Posterior vena cava (tissue), 2 donors: ENCODE measurements at regions of chr6 and their contacts with region 1.

Region 1: DNA sequence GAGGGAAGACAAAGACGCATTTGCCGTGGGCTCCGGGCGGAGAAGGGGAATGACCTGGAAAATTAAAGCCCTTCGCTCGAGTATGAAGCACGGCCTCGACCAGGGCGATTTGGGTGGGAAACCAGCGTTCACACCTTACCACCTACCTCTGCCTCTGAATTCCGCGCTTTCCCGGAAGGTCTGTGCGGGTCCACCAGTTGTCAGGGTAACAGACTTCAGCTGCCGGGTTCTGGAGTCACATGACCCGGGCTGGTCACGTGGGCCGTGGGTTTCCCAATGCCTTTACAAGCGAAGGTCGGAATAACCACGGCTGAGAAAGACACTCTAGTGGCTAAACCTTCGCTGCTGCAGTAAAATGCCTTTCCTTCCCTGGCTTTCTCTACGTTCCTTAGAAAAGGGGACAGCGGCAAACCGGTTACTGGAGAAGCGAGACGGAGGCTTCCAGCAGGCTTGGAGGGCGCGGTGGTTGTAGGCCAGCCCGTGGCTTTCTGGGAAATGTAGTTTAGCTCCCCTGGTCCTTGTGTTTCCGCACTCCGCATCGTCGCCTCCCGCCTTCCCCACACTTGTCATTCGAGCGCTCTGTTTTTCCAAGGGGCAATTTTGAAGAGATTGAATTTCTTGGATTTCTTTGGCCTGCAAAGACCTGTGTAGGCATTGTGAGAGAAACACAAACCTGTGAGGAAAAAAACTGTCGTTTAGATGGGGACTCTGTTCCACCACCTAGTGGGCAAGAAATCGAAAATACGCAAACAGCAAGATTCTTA is at the start of gene CEP162:
- DNase-seq: peak; percentile 98
- total RNA-seq, gene CEP162: 9.4 to 11.8 TPM

Region 2: DNA sequence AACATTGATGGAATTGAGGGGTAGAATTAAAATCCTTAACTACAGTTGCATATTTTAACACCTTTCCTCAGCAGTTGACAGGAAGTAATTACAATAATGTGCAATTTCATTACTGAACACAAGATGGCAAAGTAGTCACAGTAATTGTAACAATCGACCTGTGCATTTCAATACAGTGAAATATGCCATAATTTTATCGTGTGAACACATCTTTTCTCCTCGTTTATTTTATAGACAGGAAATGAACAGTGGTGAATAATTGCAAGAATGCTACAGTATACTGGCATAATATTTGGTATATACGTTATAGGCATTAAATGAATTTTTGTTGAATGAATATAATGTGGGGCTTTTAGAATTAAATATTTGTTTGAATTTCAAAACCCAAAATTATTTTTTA is 343.1 kb before region 1 on chr6:
- intact Hi-C with region 1: loop called in 1 of 2 experiments (anchors 10 kb)
- DNase-seq: no peak

Region 3: DNA sequence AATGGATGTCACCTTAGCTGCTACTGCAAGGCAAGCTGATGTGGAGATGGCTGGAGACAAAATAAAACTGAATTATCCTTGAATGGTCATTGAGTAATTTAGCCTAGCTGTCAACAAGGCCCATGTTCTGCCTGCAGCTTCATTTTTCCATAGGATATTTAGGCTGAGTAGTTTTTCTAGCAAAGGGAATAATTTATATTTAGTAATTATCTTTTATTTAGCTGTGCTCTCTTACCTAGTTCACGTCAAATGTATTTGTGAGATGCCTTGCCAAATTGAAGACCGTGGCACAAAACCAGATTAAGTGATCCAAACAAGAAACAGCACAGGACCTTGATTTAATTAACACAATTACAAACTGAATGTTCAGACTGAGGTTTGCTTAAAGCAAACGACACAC is 77.3 kb after region 1 on chr6:
- intact Hi-C with region 1: no loop called
- DNase-seq: no peak